Heart left ventricle (tissue), 16 donors: ENCODE measurements at regions of chr15 and their contacts with region 1.

Region 1: GRCh38 chr15:48636511-48636910 is 9.0 kb downstream of the FBN1 start:
- DNase-seq: no peak
- ATAC-seq: peak in 1 of 4 donors; percentile 15
- H3K4me3 ChIP-seq: no peak overlapping the region
- H3K27ac ChIP-seq: peak overlapping the region in 2 of 12 donors; percentile 11 to 26
- H3K4me1 ChIP-seq: peaks cover 0 to 68% (median 9%) of the 10 kb centered on the region in 12 donors
- H3K27me3 ChIP-seq: no peaks in the 10 kb centered on the region
- CTCF ChIP-seq: no peak
- POLR2A ChIP-seq: no peak

Region 2: DNA sequence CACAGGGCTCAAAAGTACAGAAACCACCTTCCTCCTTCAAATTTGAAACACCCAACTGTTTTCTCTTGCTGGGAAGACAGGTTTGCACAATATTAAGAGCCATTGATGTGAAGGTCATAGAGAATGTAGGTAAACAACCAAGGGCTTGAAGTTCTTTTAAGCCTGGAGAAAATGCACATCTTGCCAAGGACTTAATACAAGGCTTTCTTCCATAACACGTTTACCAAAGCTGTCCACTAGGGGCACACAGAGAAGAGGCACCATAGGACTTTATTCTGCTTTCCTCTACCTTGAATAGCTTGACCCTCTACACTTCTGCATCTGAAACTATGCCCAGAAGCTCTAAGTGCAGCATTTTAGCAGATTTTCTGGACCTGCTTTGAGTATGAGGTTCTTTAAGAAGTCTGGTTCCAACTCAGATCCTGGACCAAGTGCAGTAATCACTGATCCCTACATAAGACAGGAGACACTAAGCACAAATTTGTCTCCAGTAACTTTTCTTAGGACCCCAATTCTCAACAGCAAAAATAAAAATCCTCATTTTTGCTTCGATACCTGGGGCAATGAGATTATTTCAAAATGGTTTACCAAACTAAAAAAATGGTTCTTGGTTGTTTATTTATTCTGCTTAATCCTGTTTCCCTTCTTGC is 129.0 kb before region 1 on chr15:
- intact Hi-C with region 1: loop called in 9 of 10 experiments (anchors 5 to 10 kb)
- DNase-seq: no peak
- ATAC-seq: peak in 2 of 4 donors; percentile 39 to 55
- H3K4me3 ChIP-seq: no peak overlapping the region
- H3K27ac ChIP-seq: no peak overlapping the region
- H3K4me1 ChIP-seq: peaks cover 0 to 16% (median 0%) of the 10 kb centered on the region in 12 donors
- H3K27me3 ChIP-seq: no peaks in the 10 kb centered on the region
- CTCF ChIP-seq: peak; percentile 38 to 63 (median 50)
- POLR2A ChIP-seq: no peak